HepG2 (cell line): ENCODE measurements at regions of chr17 and their contacts with region 1.

Region 1: GRCh38 chr17:50931144-50931908 is 65.2 kb upstream of the TOB1 start:
- DNase-seq: peak; percentile 77
- ATAC-seq: peak; percentile 89
- H3K4me3 ChIP-seq: peak overlapping the region; percentile 60 to 85 (median 76)
- H3K27ac ChIP-seq: peak overlapping the region; percentile 77
- H3K4me1 ChIP-seq: peaks cover 74% of the 10 kb centered on the region
- H3K27me3 ChIP-seq: peaks cover 1 to 13% of the 10 kb centered on the region in 2 experiments; a peak in 2 of 5 replicates
- CTCF ChIP-seq: no peak
- EP300 ChIP-seq: no peak
- POLR2A ChIP-seq: 0 out of 4 replicates have a peak, but pooled peaks have one; percentile 35 to 55
- RAD21 ChIP-seq: no peak

Region 2: DNA sequence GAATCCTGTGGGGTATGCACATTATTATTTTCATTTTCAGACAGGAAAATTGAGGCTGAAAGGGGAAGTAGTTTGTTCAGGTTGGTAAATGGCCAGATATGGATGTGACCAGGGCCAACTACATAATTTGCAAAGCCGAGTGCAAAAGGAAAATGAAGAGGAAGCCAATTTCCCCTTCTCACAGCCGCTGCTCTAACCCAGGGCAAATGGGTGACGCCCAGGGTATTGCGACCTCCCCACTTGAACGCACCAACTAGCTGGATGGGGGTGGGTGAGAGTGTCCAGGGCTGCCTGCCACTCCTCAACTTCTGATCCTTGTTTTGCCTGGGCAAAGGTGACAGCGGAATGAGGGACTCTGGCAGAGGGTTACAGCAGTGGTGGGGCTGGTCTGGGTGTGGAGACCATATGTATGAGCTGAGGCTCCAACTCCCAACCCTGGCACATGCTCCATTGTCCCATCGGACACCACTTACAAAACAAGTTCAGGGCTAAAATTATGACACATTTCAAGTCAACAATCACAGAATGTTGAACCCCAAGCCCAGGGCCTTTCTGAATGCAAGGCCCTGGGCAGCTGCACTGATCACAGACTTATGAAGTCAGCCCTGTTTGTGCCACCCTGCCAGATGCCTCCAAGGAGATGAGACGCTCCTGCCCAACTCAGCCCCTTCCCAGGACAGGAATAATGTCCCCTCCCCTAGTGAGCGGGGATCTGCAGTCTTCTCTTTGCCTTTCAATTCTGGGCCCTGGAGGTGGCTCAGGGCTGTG is 165.7 kb before region 1 on chr17:
- CTCF ChIA-PET with region 1: no interaction called
- POLR2A ChIA-PET with region 1: no interaction called
- in situ Hi-C with region 1: no loop called
- intact Hi-C with region 1: no loop called
- DNase-seq: peak; percentile 29
- ATAC-seq: peak; percentile 66
- H3K4me3 ChIP-seq: peak overlapping the region; percentile 3 to 55 (median 19)
- H3K27ac ChIP-seq: no peak overlapping the region
- H3K4me1 ChIP-seq: peaks cover 62% of the 10 kb centered on the region
- H3K27me3 ChIP-seq: peaks cover 0 to 2% of the 10 kb centered on the region in 2 experiments; a peak in 1 of 5 replicates
- CTCF ChIP-seq: no peak
- EP300 ChIP-seq: no peak
- POLR2A ChIP-seq: no peak
- RAD21 ChIP-seq: no peak

Region 3: DNA sequence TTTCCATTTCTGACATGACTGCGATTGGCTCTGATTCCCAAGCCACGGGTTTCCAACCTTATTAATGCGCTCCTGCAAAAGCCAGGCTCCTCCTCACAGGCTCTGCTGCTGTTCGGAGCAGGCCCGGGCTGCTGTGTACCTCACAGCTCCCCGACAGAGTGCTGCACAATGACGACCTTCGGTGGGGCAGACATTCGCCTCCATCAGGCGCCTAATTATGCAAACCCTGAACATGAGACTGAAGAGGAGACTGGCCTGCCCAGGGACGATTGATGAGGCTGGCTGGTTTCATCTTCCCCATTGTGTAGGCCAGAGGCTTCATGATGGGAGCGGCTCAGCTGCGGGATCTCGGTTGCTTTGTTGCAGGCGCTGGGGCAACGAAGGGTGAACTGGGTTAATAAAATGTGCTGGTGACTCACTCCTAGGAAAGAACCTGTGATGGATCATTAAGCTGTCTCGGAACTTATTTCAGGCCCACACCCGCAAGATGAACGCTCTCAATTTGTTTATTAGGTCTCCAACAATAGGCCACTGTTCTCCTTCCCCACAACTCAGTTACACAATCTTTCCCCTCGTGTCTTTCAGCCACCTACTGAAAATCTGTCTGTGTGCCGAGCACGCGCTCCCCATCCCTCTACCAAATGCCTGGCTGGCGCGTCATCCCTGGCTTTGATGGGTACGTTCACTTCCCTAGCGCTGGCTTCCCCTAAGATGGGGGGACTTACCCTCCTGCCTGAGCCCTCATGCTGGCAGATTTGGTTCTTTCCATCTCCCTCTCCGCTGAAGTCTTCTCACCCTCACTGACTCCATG is 37.9 kb before region 1 on chr17:
- CTCF ChIA-PET with region 1: no interaction called
- POLR2A ChIA-PET with region 1: interaction called, 16 read pairs
- in situ Hi-C with region 1: no loop called
- intact Hi-C with region 1: no loop called
- DNase-seq: peak; percentile 90
- ATAC-seq: peak; percentile 51
- H3K4me3 ChIP-seq: peak overlapping the region; percentile 52 to 72 (median 62)
- H3K27ac ChIP-seq: peak overlapping the region; percentile 84
- H3K4me1 ChIP-seq: peaks cover 81% of the 10 kb centered on the region
- H3K27me3 ChIP-seq: no peaks in the 10 kb centered on the region
- CTCF ChIP-seq: no peak
- EP300 ChIP-seq: peak in 1 of 2 experiments; percentile 86; a peak in 2 of 4 replicates
- POLR2A ChIP-seq: peak in 1 of 2 experiments; percentile 51; a peak in 2 of 4 replicates
- RAD21 ChIP-seq: no peak

Region 4: DNA sequence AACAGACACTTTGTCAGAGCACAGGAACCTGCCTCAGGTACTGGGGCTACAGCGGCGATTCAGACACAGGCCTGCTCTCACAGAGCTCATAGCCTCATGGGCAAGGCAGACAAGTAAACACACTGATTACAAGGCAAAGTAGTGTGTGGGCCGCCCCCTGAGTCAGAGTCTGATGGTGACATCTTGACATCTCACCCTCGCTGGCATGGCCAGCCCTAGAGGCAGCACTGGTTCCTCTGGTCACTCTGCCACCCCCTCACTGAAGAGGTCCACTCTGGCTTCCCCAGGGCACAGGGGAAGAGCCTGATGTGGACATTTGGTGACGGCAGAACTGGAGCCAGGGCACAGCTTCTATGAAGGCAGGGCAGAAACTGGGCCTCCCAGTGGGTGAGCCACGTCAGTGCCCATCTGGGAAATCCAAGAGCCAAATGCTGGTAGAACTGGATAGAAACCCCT is 32.3 kb before region 1 on chr17:
- CTCF ChIA-PET with region 1: no interaction called
- POLR2A ChIA-PET with region 1: interaction called, 29 read pairs
- in situ Hi-C with region 1: no loop called
- intact Hi-C with region 1: no loop called
- DNase-seq: peak; percentile 88
- ATAC-seq: peak; percentile 93
- H3K4me3 ChIP-seq: peak overlapping the region in 1 of 3 experiments; percentile 35; a peak in 3 of 6 replicates
- H3K27ac ChIP-seq: peak overlapping the region; percentile 44
- H3K4me1 ChIP-seq: peaks cover 77% of the 10 kb centered on the region
- H3K27me3 ChIP-seq: no peaks in the 10 kb centered on the region
- CTCF ChIP-seq: peak; percentile 33; the same call in 1 of the 2 replicates
- EP300 ChIP-seq: 0 out of 4 replicates have a peak, but pooled peaks of 1 of the 2 experiments have one; percentile 51
- POLR2A ChIP-seq: no peak
- RAD21 ChIP-seq: no peak

Region 5: GRCh38 chr17:50967795-50968194 is 36.5 kb after region 1 on chr17:
- CTCF ChIA-PET with region 1: no interaction called
- POLR2A ChIA-PET with region 1: no interaction called
- in situ Hi-C with region 1: no loop called
- intact Hi-C with region 1: no loop called
- DNase-seq: no peak
- ATAC-seq: no peak
- H3K4me3 ChIP-seq: no peak overlapping the region
- H3K27ac ChIP-seq: no peak overlapping the region
- H3K4me1 ChIP-seq: peaks cover 21% of the 10 kb centered on the region
- H3K27me3 ChIP-seq: no peaks in the 10 kb centered on the region
- CTCF ChIP-seq: no peak
- EP300 ChIP-seq: no peak
- POLR2A ChIP-seq: no peak
- RAD21 ChIP-seq: no peak

Region 6: DNA sequence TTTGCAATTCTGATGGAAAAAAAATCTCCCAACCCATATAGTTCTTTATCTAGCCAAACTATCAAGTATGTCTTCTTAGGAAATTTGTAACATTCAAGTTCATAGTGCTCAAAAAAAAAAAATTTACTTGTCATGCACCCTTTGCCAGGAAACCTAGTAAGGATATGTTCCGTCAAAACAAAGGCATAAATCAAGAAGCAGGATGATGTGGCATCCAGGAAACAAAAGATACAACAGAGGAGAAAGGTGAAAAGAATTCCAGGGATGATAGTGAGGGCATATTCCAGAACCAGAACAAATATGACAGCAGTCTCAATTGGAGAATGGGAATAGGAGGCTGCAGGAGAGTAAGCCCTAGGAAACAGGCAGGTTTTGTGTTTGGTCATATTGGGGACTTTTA is 84.8 kb after region 1 on chr17:
- CTCF ChIA-PET with region 1: no interaction called
- POLR2A ChIA-PET with region 1: no interaction called
- in situ Hi-C with region 1: no loop called
- intact Hi-C with region 1: no loop called
- DNase-seq: no peak
- ATAC-seq: no peak
- H3K4me3 ChIP-seq: no peak overlapping the region
- H3K27ac ChIP-seq: no peak overlapping the region
- H3K4me1 ChIP-seq: no peaks in the 10 kb centered on the region
- H3K27me3 ChIP-seq: no peaks in the 10 kb centered on the region
- CTCF ChIP-seq: no peak
- EP300 ChIP-seq: no peak
- POLR2A ChIP-seq: no peak
- RAD21 ChIP-seq: no peak